Mammary epithelial cell (primary cell): ENCODE measurements at regions of chr9 and their contacts with region 1.

Region 1: GRCh38 chr9:121700163-121700831 is 48.9 kb downstream of the DAB2IP start:
- DNase-seq: peak; percentile 99
- H3K4me3 ChIP-seq: peak overlapping the region; percentile 67 to 88 (median 72)
- H3K27ac ChIP-seq: peak overlapping the region; percentile 79
- H3K4me1 ChIP-seq: peaks cover 52% of the 10 kb centered on the region
- H3K27me3 ChIP-seq: no peaks in the 10 kb centered on the region
- CTCF ChIP-seq: peak; percentile 56 to 80

Region 2: DNA sequence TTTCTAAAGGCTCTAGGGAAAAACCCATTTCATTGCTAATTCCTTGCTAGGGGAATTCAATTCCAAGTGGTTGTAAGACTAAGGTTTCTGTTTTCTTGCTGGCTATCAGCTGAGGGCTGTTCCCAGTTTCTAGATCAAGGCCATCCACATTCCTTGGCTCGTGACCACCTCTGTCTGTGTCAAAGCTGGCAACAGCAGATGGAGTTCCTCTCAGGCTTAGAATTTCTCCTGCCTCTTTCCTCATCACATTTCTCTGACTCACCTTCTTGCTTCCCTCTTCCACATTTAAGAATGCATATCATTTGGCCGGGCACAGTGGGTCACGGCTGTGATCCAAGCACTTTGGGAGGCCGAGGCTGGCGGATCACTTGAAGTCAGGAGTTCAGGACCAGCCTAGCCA is 29.9 kb before region 1 on chr9:
- CTCF ChIA-PET with region 1: no interaction called
- dilution Hi-C with region 1: no loop called
- in situ Hi-C with region 1: no loop called
- intact Hi-C with region 1: no loop called
- DNase-seq: no peak
- H3K4me3 ChIP-seq: no peak overlapping the region
- H3K27ac ChIP-seq: no peak overlapping the region
- H3K4me1 ChIP-seq: no peaks in the 10 kb centered on the region
- H3K27me3 ChIP-seq: no peaks in the 10 kb centered on the region
- CTCF ChIP-seq: no peak

Region 3: GRCh38 chr9:121718082-121718856 is 18.0 kb after region 1 on chr9:
- CTCF ChIA-PET with region 1: interaction called, 7 read pairs
- dilution Hi-C with region 1: no loop called
- in situ Hi-C with region 1: no loop called
- intact Hi-C with region 1: loop called (anchors 1 kb)
- DNase-seq: peak; percentile 79
- H3K4me3 ChIP-seq: no peak overlapping the region
- H3K27ac ChIP-seq: peak overlapping the region; percentile 88
- H3K4me1 ChIP-seq: peaks cover 73% of the 10 kb centered on the region
- H3K27me3 ChIP-seq: no peaks in the 10 kb centered on the region
- CTCF ChIP-seq: no peak

Region 4: GRCh38 chr9:121735065-121735789 is 34.9 kb after region 1 on chr9:
- CTCF ChIA-PET with region 1: interaction called, 4 read pairs
- dilution Hi-C with region 1: no loop called
- in situ Hi-C with region 1: no loop called
- intact Hi-C with region 1: loop called (anchors 1 kb)
- DNase-seq: peak; percentile 70
- H3K4me3 ChIP-seq: no peak overlapping the region
- H3K27ac ChIP-seq: peak overlapping the region; percentile 68
- H3K4me1 ChIP-seq: peaks cover 69% of the 10 kb centered on the region
- H3K27me3 ChIP-seq: no peaks in the 10 kb centered on the region
- CTCF ChIP-seq: peak; percentile 50 to 73

Region 5: DNA sequence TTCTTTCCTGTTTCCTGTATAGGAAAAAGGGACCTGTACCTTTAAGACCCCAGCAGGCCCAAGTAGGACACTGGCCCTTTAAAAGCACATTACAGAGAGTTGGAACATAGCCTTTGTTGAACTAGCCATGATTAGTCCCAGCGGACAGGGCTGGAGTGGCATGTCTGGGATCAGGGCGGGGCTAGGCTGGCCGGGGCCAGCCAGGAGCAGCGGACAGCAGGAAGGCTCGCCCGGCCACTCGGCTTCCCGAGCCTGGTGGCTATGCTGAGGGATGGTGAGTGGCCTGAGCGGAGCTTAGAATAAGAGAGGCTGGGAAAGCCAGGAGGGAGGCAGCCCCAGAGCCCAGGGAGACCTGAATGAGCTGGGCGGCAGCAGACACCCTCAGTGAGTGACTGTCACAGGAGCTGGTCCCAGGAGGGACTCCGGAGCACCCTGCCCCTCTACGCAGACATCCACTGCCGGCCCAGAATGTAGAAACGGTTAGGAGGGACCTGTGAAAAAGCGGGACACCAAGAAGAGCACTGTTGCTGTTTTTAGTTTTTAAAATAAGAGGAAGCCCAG is 43.2 kb after region 1 on chr9:
- CTCF ChIA-PET with region 1: interaction called, 3 read pairs
- dilution Hi-C with region 1: no loop called
- in situ Hi-C with region 1: no loop called
- intact Hi-C with region 1: loop called (anchors 1 kb)
- DNase-seq: peak; percentile 77
- H3K4me3 ChIP-seq: peak overlapping the region; percentile 32 to 54 (median 49)
- H3K27ac ChIP-seq: peak overlapping the region; percentile 59
- H3K4me1 ChIP-seq: peaks cover 66% of the 10 kb centered on the region
- H3K27me3 ChIP-seq: no peaks in the 10 kb centered on the region
- CTCF ChIP-seq: peak in 1 of 2 donors; percentile 20

Region 6: DNA sequence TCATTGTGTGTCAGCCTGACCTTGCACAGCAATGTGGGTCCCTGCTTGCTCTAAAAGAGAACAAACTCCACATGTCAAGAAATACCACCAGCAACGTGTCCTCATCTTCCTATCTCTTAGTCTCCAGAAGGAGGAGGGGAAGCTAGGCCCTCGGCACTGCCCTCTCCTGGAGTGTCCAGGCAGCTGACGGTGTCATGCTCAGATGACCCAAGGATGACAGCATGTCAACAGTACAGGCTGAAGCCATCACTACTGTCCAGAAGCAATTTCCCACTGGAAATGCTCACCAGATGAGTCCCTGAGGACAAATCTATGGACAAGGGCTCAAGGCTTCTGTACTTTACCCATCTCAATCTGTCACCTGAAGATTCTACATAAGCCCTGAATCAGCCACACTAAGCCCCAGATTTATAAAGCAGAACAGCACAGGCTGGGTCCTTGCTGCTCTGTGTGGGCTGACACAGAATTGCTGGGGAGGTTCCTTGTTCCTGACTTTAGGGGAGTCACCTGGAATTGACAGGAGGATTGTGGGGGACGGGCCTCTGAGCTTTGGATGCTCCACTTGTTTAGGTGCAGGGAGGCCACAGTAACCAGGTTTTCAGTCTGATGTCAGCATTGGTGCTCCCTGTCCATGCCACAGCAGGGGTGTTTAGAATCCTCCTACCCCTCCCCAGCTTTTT is 161.3 kb after region 1 on chr9:
- CTCF ChIA-PET with region 1: no interaction called
- dilution Hi-C with region 1: no loop called
- in situ Hi-C with region 1: no loop called
- intact Hi-C with region 1: loop called (anchors 5 kb)
- DNase-seq: no peak
- H3K4me3 ChIP-seq: no peak overlapping the region
- H3K27ac ChIP-seq: no peak overlapping the region
- H3K4me1 ChIP-seq: no peaks in the 10 kb centered on the region
- H3K27me3 ChIP-seq: no peaks in the 10 kb centered on the region
- CTCF ChIP-seq: peak; percentile 34 to 50

Region 7: DNA sequence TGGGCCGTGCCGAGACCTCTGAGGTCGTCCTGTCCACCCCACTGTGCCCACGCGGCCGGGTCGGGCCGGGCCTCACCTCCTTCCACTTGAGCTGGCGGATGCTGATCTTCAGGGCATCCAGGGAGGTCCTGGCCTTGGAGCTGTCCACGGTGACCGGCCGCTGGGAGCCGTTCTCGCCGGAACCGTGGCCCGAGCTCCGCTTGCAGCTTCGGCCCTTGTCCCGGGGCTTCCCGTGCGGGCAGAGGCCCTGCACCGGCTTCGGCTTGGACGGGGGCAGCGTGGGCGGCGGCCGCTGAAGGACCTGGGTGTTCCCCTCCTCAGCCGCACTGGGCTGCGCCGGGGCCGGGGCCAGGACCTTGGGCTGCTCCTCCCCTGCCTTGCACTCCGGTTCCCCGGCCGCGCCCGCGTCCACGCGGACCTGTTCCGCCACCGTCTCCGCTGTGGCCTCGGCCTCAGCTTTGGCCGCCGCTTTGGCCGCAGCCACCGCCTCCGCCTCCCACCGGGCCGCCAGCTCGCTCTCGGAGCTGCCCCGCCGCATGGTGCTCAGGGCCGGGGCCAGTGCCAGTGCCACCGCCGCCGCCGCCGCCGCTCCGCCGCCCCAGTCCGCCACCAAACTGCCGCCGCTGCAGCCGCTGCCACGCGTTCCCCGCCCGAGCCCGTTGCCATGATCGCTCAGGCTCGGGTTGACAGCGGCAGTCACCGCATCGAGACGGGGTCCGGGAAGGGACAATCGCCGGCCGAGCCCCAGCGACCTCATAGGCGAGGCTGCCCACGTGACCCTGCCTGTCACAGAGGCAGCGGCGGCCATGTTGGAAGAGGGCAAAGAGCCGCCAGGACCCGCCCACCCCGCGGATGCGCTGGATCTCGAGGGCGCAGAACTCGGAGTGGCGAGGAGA is 392.6 kb after region 1 on chr9 and contains the start of gene TTLL11:
- CTCF ChIA-PET with region 1: no interaction called
- dilution Hi-C with region 1: no loop called
- in situ Hi-C with region 1: no loop called
- intact Hi-C with region 1: loop called (anchors 5 kb)
- DNase-seq: peak; percentile 89
- H3K4me3 ChIP-seq: peak within 1 kb of the TSS; percentile 65 to 91 (median 74)
- H3K27ac ChIP-seq: peak within 1 kb of the TSS; percentile 10
- H3K4me1 ChIP-seq: peaks cover 13% of the 10 kb centered on the region
- H3K27me3 ChIP-seq: no peaks in the 10 kb centered on the region
- CTCF ChIP-seq: no peak
- total RNA-seq, gene TTLL11: 5.7 to 17.5 TPM